Activated CD4-positive, alpha-beta T cell treated with anti-CD3 and anti-CD28 coated beads, Interleukin-2, amount 10 ng/mL, durations not matched to agents 7 days and 5 days (primary cell): ENCODE measurements at regions of chr14 and their contacts with region 1.

Region 1: DNA sequence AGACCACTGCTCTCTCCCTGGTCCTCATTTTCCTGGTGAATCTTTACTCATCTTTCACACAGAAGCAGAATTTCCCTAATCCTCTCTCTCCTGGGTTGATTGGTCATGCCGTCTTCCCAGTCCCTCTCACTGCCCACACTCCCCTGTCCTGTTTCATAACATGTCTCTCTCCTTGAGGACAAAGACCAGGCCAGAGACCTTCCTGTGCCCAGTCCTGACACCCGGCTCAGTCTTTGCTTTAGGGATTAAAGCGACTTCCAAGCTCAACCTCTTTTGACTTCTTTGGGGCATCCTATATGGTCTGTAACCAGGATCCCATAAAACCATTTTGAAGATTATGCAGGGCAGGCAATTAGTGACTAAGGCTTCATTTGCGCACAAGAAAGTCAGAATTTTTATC is 105.5 kb downstream of the BCL11B start:
- DNase-seq: no peak
- H3K4me3 Mint-ChIP-seq: no peak overlapping the region
- H3K27ac Mint-ChIP-seq: peak overlapping the region; percentile 43
- H3K4me1 Mint-ChIP-seq: peaks cover 3% of the 10 kb centered on the region
- H3K27me3 Mint-ChIP-seq: no peaks in the 10 kb centered on the region

Region 2: DNA sequence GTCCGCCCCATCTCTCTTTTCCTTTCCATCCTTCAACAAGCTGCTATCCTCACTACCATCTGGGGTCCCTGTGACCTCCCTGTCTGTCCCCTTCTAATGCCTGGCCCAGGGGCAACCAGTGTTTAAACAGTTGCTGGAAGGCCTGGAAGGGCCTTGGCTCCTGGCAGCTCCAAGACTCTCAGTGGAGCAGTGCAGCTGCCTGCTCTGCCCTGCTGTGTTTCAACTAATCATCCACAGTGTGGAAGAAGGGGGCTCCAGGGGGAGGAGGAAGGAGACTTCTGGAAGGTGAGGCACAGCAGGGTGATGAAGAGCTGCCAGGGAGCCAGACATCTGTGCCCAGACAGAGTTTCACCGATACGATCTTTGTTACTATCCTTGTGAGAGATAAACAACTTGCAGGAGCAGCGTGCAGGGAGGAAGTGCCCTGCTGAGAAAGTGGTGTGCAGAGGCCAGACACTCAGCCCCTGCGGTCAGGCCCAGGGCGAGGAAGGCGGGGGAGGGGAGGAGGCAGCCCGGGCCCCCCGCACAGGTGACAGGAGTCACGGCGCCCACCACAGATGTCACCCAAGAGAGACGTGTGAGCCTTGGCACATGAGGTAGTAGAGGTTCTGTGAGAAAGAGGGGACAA is 956.3 kb before region 1 on chr14:
- CTCF ChIA-PET with region 1: no interaction called
- POLR2A ChIA-PET with region 1: interaction called, 10 read pairs
- DNase-seq: peak; percentile 50
- H3K4me3 Mint-ChIP-seq: peak overlapping the region; percentile 45
- H3K27ac Mint-ChIP-seq: peak overlapping the region; percentile 97
- H3K4me1 Mint-ChIP-seq: peaks cover 77% of the 10 kb centered on the region
- H3K27me3 Mint-ChIP-seq: no peaks in the 10 kb centered on the region

Region 3: GRCh38 chr14:99077076-99077843 is 89.2 kb before region 1 on chr14:
- CTCF ChIA-PET with region 1: no interaction called
- POLR2A ChIA-PET with region 1: no interaction called
- DNase-seq: no peak
- H3K4me3 Mint-ChIP-seq: no peak overlapping the region
- H3K27ac Mint-ChIP-seq: no peak overlapping the region
- H3K4me1 Mint-ChIP-seq: peaks cover 25% of the 10 kb centered on the region
- H3K27me3 Mint-ChIP-seq: no peaks in the 10 kb centered on the region

Region 4: DNA sequence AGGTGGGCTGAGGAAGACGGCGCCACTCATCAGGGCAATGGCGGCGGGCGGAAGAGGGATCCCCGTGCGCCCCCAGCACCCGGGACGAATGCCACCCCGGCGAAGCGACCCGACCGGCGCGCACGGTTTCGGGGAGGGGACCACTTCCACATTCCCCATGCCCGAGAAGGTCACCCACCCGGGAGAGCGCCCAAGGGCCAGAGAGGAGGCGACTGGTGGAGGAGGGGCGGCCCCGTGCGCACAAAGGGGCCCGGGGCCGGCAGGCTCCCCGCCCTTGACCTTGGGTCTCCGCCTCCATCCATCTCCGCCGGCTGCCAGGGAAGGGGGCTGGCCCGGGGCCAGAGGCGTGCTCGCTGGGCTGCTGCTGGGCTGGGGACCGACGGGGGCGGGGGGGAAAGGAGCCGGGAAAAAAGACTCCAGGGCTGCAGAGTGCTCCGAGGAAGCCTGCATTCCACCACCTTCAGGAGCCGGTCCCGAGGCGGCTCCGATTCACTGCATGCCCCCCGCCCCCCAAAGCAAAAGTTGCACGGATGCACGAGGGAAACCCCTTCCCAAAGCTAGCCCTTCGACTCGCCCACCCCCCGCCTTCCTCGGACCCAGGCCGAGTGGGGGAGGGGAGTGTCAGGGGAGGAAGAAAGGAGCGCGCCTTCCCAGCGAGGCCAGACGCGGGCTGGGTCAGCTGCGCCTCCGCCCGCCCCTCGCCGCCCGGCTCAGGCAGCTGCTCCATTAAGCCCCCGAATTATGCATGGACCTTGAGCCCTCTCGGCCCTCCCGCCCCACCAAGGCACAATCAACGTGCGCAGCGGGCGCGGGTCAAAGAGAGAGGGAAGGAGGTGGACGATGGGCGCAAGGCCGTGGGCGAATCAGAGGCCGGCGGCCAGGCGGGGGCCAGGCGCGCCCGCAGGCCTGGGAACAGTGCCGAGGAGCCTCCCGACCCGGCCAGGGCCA is 79.3 kb after region 1 on chr14:
- CTCF ChIA-PET with region 1: no interaction called
- POLR2A ChIA-PET with region 1: no interaction called
- DNase-seq: no peak
- H3K4me3 Mint-ChIP-seq: peak overlapping the region; percentile 78
- H3K27ac Mint-ChIP-seq: peak overlapping the region; percentile 96
- H3K4me1 Mint-ChIP-seq: peaks cover 86% of the 10 kb centered on the region
- H3K27me3 Mint-ChIP-seq: no peaks in the 10 kb centered on the region